Testis (tissue), 5 donors: ENCODE measurements at regions of chr5 and their contacts with region 1.

Region 1: GRCh38 chr5:138138949-138139780 is at the start of gene NME5:
- DNase-seq: peak; percentile 90
- H3K4me3 ChIP-seq: peak within 1 kb of the TSS; percentile 67 to 76
- H3K27ac ChIP-seq: peak within 1 kb of the TSS in 1 of 2 donors; percentile 5
- H3K4me1 ChIP-seq: no peaks in the 10 kb centered on the region
- H3K27me3 ChIP-seq: no peaks in the 10 kb centered on the region
- CTCF ChIP-seq: no peak
- POLR2A ChIP-seq: no peak
- total RNA-seq, gene NME5: 22.4 to 35.1 TPM

Region 2: DNA sequence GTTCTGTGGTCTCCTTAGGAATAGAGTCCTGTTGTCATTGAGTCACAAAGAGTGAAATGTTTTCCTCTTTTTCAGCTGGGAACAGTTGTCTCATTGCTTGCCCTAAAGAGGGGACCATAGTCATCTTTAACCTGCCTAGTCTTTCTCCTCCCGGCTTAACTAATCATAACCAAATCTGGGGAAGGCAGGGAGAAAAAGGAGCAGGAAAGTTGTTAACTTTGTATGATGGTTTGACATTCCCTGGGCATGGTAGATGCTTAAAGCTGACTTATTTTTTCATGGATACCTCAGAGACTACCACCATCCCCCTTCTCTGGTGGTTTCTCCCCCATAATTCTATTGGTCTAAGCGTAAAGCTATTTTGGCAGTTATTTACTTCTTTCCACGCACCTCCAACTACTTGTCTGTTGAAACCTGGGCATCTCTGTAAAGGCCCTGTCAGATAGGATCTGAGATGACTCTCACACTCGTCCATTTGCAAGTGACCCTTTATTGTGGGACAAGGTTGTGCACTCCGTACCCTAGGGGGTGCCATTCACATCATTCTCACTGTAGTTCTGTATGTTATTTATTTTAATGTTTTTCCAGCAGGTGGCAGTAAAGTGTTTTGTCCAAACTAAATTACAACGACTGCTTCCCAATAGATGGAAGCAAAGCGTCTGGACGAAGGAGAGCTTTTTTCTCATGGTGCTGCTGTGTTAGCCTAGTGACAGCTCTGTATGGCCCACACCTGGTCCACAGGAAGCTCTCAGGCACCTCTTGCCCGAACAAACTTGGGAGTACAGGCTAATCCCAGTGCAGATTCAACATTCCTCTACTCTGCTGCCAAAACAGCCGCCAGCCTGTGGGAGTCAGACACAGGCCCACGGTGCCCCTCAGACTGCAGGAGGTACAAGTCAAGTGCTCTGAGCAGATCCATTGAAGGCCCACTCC is 103.3 kb before region 1 on chr5:
- intact Hi-C with region 1: loop called (anchors 10 kb)
- DNase-seq: peak; percentile 77
- H3K4me3 ChIP-seq: no peak overlapping the region
- H3K27ac ChIP-seq: peak overlapping the region; percentile 77 to 78
- H3K4me1 ChIP-seq: peaks cover 54% of the 10 kb centered on the region
- H3K27me3 ChIP-seq: no peaks in the 10 kb centered on the region
- CTCF ChIP-seq: peak; percentile 77 to 95 (median 92)
- POLR2A ChIP-seq: no peak

Region 3: DNA sequence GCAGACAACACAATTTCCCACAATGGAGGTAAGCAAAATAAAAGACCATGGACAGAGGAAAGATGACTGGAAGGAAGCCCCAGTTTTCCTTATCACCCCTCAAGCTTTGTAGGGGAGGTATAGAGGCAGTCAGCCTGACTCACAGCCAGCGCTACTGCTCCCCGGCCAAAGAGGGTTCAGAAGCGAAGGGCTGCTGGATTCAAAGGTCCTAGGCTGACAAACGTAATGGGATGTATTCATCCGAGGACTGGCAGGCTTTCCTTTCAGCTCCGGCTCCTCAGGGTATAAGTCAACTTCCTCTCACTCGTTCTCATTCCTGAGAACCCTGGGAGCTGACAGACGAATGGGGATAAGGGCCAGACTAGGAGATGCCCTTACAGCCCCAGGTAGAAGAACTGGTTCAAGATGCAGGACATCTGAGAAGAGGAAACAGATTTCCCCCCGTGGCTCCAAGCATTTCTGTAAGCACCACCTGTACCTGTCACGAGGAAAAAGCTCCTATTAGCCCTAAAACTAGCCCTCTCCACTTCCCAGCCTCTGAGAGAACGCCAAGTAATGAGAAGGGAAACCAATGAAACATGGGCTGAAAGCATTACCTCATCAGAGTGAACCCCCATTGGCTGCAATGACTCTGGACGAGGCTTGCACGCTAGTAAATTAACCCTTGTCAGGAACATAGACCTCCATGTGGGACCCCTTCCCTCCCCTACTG is 84.2 kb before region 1 on chr5:
- intact Hi-C with region 1: no loop called
- DNase-seq: peak; percentile 78
- H3K4me3 ChIP-seq: no peak overlapping the region
- H3K27ac ChIP-seq: peak overlapping the region; percentile 69 to 83
- H3K4me1 ChIP-seq: peaks cover 24% of the 10 kb centered on the region
- H3K27me3 ChIP-seq: no peaks in the 10 kb centered on the region
- CTCF ChIP-seq: no peak
- POLR2A ChIP-seq: no peak

Region 4: DNA sequence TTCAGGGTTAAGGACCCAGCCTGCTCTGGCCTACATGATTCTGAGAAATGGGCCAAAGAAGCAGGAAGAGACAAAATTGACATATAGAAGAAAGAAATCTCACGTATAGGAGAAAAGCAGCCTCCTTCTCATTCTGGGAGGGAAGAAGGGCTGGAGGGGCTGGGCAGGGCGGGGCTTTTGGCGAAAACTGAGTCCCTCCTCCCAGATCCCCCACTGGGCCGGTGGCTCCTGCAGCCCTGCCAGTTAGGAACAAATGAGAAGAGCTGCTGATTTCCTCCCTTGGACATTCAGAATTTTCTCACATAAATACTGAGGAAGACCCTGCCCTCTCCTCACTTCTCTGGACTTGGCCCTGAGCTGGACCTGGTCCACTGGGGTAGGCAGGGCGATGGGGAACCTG is 55.5 kb before region 1 on chr5 and contains the start of gene WNT8A:
- intact Hi-C with region 1: loop called (anchors 10 kb)
- DNase-seq: no peak
- H3K4me3 ChIP-seq: no peak within 1 kb of the TSS
- H3K27ac ChIP-seq: no peak within 1 kb of the TSS
- H3K4me1 ChIP-seq: no peaks in the 10 kb centered on the region
- H3K27me3 ChIP-seq: no peaks in the 10 kb centered on the region
- CTCF ChIP-seq: no peak
- POLR2A ChIP-seq: no peak
- total RNA-seq, gene WNT8A: 0.71 to 1.3 TPM